ENCODE measurements at regions of chr2 and their contacts with region 1.

Region 1: DNA sequence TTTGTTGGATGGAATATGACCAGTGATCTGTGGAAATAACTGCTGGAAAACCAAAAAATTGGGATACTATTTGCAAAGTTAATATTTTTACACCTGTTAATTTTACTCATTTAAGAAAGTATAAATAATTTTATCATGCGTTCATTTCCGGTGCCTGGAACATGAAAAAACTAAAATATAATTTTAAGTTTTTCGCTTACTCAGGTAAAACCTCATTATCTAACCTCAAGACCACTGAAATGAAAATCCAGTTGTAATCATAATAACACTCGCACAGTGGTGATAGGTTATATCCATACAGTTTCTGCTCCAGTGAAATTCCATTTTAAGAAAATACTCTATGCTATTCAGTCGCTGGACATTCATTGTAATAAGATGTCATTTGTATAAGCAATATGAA is 517.9 kb downstream of the DPP10 start:
- DNase-seq: no peak
- H3K4me3 ChIP-seq: no peak overlapping the region
- H3K4me3 Mint-ChIP-seq: no peak overlapping the region
- H3K27ac Mint-ChIP-seq: no peak overlapping the region
- H3K4me1 ChIP-seq: no peaks in the 10 kb centered on the region
- H3K4me1 Mint-ChIP-seq: no peaks in the 10 kb centered on the region
- H3K27me3 ChIP-seq: no peaks in the 10 kb centered on the region
- H3K27me3 Mint-ChIP-seq: peaks cover 7% of the 10 kb centered on the region
- CTCF ChIP-seq: no peak

Region 2: DNA sequence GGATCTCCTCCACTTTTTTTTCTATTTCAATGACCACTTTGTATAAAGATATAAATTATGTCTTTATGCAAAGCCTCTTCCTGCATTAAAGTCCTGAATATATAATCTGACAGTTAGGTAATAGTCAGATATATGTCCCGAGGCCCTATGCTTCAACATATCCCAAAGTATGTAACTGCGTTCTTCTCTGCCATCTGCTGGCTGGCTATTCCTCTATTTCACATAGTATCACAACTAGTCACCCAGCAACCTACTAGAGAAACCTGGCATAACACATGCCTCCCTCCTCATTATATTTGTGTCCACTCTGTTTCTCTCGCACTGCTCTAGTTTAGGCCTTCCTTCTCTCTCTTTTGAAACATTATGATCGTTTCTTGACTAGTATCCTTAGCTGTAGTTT is 122.8 kb after region 1 on chr2:
- CTCF ChIA-PET with region 1: no interaction called
- POLR2A ChIA-PET with region 1: no interaction called
- intact Hi-C with region 1: loop called (anchors 1 kb)
- DNase-seq: peak in 1 of 2 experiments; percentile 40
- H3K4me3 ChIP-seq: no peak overlapping the region
- H3K4me3 Mint-ChIP-seq: no peak overlapping the region
- H3K27ac Mint-ChIP-seq: no peak overlapping the region
- H3K4me1 ChIP-seq: no peaks in the 10 kb centered on the region
- H3K4me1 Mint-ChIP-seq: no peaks in the 10 kb centered on the region
- H3K27me3 ChIP-seq: no peaks in the 10 kb centered on the region
- H3K27me3 Mint-ChIP-seq: no peaks in the 10 kb centered on the region
- CTCF ChIP-seq: peak; percentile 42 to 54

Region 3: GRCh38 chr2:115183144-115183543 is 222.8 kb after region 1 on chr2:
- CTCF ChIA-PET with region 1: no interaction called
- POLR2A ChIA-PET with region 1: no interaction called
- intact Hi-C with region 1: loop called (anchors 1 kb)
- DNase-seq: peak in 1 of 2 experiments; percentile 19
- H3K4me3 ChIP-seq: no peak overlapping the region
- H3K4me3 Mint-ChIP-seq: no peak overlapping the region
- H3K27ac Mint-ChIP-seq: no peak overlapping the region
- H3K4me1 ChIP-seq: no peaks in the 10 kb centered on the region
- H3K4me1 Mint-ChIP-seq: no peaks in the 10 kb centered on the region
- H3K27me3 ChIP-seq: no peaks in the 10 kb centered on the region
- H3K27me3 Mint-ChIP-seq: no peaks in the 10 kb centered on the region
- CTCF ChIP-seq: peak; percentile 19 to 32

Region 4: GRCh38 chr2:115194623-115195022 is 234.2 kb after region 1 on chr2:
- CTCF ChIA-PET with region 1: no interaction called
- POLR2A ChIA-PET with region 1: no interaction called
- intact Hi-C with region 1: loop called (anchors 1 kb)
- DNase-seq: no peak
- H3K4me3 ChIP-seq: no peak overlapping the region
- H3K4me3 Mint-ChIP-seq: no peak overlapping the region
- H3K27ac Mint-ChIP-seq: no peak overlapping the region
- H3K4me1 ChIP-seq: no peaks in the 10 kb centered on the region
- H3K4me1 Mint-ChIP-seq: no peaks in the 10 kb centered on the region
- H3K27me3 ChIP-seq: no peaks in the 10 kb centered on the region
- H3K27me3 Mint-ChIP-seq: peaks cover 17% of the 10 kb centered on the region
- CTCF ChIP-seq: peak in 1 of 2 experiments; percentile 24